GM12878 (cell line): ENCODE measurements at regions of chr4 and their contacts with region 1.

Region 1: DNA sequence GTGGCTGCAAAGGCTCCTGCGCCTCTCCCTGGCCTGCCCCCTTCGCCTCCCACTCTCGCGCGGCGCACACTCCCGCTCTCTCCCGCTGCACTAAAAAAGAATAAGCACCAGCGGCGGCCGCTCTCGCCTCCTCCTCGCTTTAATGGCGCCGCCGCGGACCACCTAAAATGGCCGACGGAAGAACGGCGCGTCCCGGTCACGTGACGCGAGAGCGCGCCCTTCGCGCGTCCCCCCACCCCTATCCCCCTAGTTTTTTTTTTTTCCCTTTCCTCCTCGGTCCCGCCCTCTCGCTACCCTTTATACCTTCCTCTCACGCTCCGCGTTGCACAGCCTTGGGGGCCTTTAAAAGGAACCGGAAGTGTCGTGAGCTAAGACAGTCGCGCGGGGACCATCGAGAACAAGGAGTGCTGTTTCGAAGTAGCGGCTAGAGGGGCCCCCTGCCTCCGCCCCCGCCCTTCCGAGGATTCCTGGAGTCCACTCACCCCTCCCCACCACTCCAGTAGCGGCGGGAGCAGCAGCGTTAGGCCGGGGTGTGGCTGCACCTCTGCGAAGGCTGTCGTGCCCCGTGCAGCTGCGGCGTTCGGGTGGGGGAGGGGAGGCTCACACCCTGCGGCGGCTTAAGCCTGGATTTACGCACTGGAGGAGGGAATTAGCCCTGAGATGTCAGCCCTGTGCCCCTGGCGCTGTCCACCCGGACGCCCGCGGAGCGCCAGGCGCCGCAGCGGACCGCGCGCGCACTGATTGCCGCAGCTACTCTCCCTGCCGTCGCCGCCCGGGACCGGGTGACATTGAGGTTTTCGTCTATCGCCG is at the start of gene HNRNPD:
- DNase-seq: peak; percentile 97
- ATAC-seq: peak; percentile 92
- H3K4me3 ChIP-seq: peak within 1 kb of the TSS; percentile 90
- H3K27ac ChIP-seq: peak within 1 kb of the TSS; percentile 98
- H3K4me1 ChIP-seq: peaks cover 6% of the 10 kb centered on the region
- H3K27me3 ChIP-seq: no peaks in the 10 kb centered on the region
- CTCF ChIP-seq: no peak
- EP300 ChIP-seq: peak in 1 of 2 experiments; percentile 28; a peak in 1 of 4 replicates
- POLR2A ChIP-seq: peak; percentile 99
- RAD21 ChIP-seq: 0 out of 2 replicates have a peak, but pooled peaks have one; percentile 1
- polyA plus RNA-seq, gene HNRNPD: 183 to 313 TPM

Region 2: GRCh38 chr4:81421346-81422218 is 952.4 kb before region 1 on chr4:
- CTCF ChIA-PET with region 1: no interaction called
- POLR2A ChIA-PET with region 1: no interaction called
- RAD21 ChIA-PET with region 1: no interaction called
- SMC1A ChIA-PET with region 1: no interaction called
- in situ Hi-C with region 1: no loop called
- intact Hi-C with region 1: no loop called
- DNase-seq: peak; percentile 26
- ATAC-seq: peak; percentile 99
- H3K4me3 ChIP-seq: no peak overlapping the region
- H3K27ac ChIP-seq: no peak overlapping the region
- H3K4me1 ChIP-seq: peaks cover 7% of the 10 kb centered on the region
- H3K27me3 ChIP-seq: no peaks in the 10 kb centered on the region
- CTCF ChIP-seq: no peak
- EP300 ChIP-seq: no peak
- POLR2A ChIP-seq: no peak
- RAD21 ChIP-seq: no peak

Region 3: DNA sequence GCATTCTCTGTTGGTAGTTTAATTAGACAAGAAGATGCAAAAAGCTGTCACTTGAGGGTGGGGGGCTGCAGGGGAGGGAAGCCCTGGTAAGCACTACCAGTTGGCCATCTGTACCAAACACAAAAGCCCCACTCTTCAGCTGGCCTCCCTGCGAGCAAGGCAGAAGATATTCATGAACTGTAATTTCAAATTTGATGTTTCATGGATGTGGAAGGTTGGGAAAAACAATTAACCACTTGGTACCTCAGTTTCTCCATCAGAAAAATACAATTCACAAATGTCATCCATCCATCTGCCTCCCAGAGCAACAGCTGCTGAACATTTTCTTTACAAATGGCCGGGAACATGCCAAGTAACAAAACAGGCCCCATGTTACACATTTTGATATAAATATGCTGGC is 265.5 kb before region 1 on chr4:
- CTCF ChIA-PET with region 1: no interaction called
- POLR2A ChIA-PET with region 1: no interaction called
- RAD21 ChIA-PET with region 1: no interaction called
- SMC1A ChIA-PET with region 1: no interaction called
- in situ Hi-C with region 1: no loop called
- intact Hi-C with region 1: no loop called
- DNase-seq: no peak
- ATAC-seq: no peak
- H3K4me3 ChIP-seq: no peak overlapping the region
- H3K27ac ChIP-seq: no peak overlapping the region
- H3K4me1 ChIP-seq: no peaks in the 10 kb centered on the region
- H3K27me3 ChIP-seq: no peaks in the 10 kb centered on the region
- CTCF ChIP-seq: no peak
- EP300 ChIP-seq: no peak
- POLR2A ChIP-seq: no peak
- RAD21 ChIP-seq: no peak

Region 4: GRCh38 chr4:82360298-82361177 is 13.5 kb before region 1 on chr4:
- CTCF ChIA-PET with region 1: interaction called, 49 read pairs
- POLR2A ChIA-PET with region 1: interaction called, 8 read pairs
- RAD21 ChIA-PET with region 1: interaction called, 7 read pairs
- SMC1A ChIA-PET with region 1: interaction called, 39 read pairs
- in situ Hi-C with region 1: no loop called
- intact Hi-C with region 1: no loop called
- DNase-seq: no peak
- ATAC-seq: peak; percentile 52
- H3K4me3 ChIP-seq: no peak overlapping the region
- H3K27ac ChIP-seq: no peak overlapping the region
- H3K4me1 ChIP-seq: peaks cover 5% of the 10 kb centered on the region; the same call in 1 of the 2 replicates
- H3K27me3 ChIP-seq: no peaks in the 10 kb centered on the region
- CTCF ChIP-seq: peak; percentile 54 to 67 (median 58)
- EP300 ChIP-seq: no peak
- POLR2A ChIP-seq: no peak
- RAD21 ChIP-seq: peak; percentile 42

Region 5: DNA sequence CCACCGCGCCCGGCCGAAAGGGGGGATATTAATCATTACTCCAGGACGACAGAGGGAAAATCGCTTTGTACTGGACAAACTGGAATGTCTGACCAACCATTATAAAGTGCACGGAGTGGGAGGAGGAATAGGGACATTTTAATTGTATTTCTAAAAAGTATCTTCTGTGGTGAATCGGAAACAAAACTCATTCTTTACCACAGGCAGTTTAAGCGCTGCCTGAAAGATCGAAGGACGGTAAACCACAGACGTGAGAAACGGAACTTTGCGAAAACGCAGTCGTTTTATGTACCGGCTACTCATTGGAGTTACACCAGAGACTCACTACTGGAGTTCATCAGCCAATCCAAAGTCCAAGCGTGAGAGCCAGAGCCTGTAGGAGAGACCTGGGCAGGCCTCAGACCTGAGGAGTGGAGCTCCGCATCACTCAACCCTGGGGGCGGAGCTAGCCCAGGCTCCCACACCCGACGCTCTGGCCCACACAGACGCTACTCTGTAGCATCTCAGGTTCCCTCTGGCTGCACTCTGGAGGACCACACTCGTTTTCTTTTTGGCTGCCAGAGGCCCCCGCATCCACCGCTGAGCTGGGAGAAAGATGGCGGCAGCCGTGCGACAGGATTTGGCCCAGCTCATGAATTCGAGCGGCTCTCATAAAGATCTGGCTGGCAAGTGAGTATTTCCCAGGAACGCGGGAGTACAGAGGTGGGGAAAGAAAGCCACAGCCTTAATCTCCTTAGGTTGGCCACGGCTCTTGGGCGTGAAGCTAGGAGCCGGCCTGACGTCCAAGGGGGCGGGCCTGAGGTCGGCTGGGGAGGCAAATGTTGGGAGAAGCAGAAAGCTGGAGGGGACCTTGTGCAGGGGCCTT is 660.8 kb after region 1 on chr4 and contains the start of gene COPS4:
- CTCF ChIA-PET with region 1: no interaction called
- POLR2A ChIA-PET with region 1: no interaction called
- RAD21 ChIA-PET with region 1: no interaction called
- SMC1A ChIA-PET with region 1: no interaction called
- in situ Hi-C with region 1: no loop called
- intact Hi-C with region 1: loop called (anchors 10 kb)
- DNase-seq: peak; percentile 100
- ATAC-seq: peak; percentile 96
- H3K4me3 ChIP-seq: peak within 1 kb of the TSS; percentile 78
- H3K27ac ChIP-seq: peak within 1 kb of the TSS; percentile 77
- H3K4me1 ChIP-seq: peaks cover 6% of the 10 kb centered on the region
- H3K27me3 ChIP-seq: no peaks in the 10 kb centered on the region
- CTCF ChIP-seq: peak in 1 of 3 experiments; percentile 17; a peak in 1 of 6 replicates
- EP300 ChIP-seq: peak; percentile 42 to 66; a peak in 3 of 4 replicates
- POLR2A ChIP-seq: peak; percentile 74
- RAD21 ChIP-seq: 0 out of 2 replicates have a peak, but pooled peaks have one; percentile 15
- polyA plus RNA-seq, gene COPS4: 112 to 159 TPM